ENCODE measurements at regions of chr1 and their contacts with region 1.

Region 1: GRCh38 chr1:210292231-210292871 is 36.4 kb upstream of the HHAT start:
- DNase-seq: peak; percentile 84
- ATAC-seq: peak; percentile 93
- H3K4me3 Mint-ChIP-seq: peak overlapping the region; percentile 63
- H3K27ac Mint-ChIP-seq: no peak overlapping the region
- H3K4me1 Mint-ChIP-seq: peaks cover 37% of the 10 kb centered on the region
- H3K27me3 Mint-ChIP-seq: peaks cover 36% of the 10 kb centered on the region
- CTCF ChIP-seq: no peak

Region 2: GRCh38 chr1:210250998-210251679 is 41.2 kb before region 1 on chr1:
- CTCF ChIA-PET with region 1: interaction called, 9 read pairs
- POLR2A ChIA-PET with region 1: interaction called, 17 read pairs
- DNase-seq: peak; percentile 79
- ATAC-seq: peak; percentile 52
- H3K4me3 Mint-ChIP-seq: peak overlapping the region; percentile 72
- H3K27ac Mint-ChIP-seq: peak overlapping the region; percentile 53
- H3K4me1 Mint-ChIP-seq: peaks cover 39% of the 10 kb centered on the region
- H3K27me3 Mint-ChIP-seq: peaks cover 17% of the 10 kb centered on the region
- CTCF ChIP-seq: no peak

Region 3: DNA sequence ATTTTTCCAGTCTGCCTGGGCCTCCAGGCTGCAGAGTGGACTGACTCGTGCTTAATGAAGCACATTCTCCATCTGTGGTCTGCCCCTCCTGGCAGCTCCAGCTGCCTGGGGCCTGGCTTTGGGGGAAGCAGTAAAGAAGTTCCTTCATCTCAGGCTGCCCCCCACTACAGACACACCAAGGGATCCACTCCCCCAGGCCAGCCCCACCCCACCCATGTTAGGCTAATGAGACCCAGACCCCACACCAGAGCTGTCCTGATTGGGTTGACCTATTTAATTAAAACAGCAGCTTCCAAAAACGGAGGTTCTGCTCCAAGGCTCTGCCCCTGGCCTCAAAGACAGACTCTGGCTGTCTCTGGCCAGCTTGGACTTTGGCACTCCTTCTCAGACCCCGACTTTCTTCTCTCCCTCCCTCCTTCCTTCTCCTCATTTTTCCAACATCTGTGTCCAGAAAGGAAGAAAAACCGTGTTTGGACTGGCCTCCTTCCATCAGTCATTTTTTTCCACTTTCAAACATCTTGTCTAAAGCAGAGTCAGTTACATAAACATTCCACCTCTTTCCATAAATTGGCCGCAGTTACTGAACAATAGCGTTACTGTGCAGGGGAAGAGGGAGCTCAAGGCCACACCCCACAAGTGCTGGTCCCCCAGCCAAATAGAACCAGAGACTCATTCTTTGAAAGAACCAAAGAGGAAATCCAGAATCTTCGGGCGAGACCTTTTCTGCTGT is 30.0 kb before region 1 on chr1:
- CTCF ChIA-PET with region 1: interaction called, 30 read pairs
- POLR2A ChIA-PET with region 1: no interaction called
- DNase-seq: no peak
- ATAC-seq: no peak
- H3K4me3 Mint-ChIP-seq: no peak overlapping the region
- H3K27ac Mint-ChIP-seq: no peak overlapping the region
- H3K4me1 Mint-ChIP-seq: peaks cover 19% of the 10 kb centered on the region
- H3K27me3 Mint-ChIP-seq: no peaks in the 10 kb centered on the region; the same call in 1 of the 2 replicates
- CTCF ChIP-seq: no peak

Region 4: DNA sequence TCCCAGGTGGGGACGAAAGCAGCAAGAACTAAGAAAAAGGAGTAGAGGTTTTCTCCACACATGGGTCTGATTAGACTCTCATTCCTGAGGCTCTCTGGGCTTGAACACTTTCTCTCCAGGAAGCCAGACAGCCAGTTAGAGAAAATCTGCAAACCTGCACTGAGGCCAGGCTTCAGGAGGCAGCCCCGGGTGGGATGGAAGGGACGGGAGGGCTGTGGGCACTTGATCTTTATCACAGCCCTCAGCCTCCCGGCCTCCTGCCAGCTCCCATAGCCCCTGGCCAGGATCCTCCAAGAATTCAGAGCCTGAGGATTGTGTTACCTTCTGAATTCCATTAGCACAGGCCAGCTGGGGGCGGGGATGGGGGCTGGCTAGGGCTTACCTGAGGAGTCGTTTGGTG is 19.7 kb before region 1 on chr1:
- CTCF ChIA-PET with region 1: interaction called, 10 read pairs
- POLR2A ChIA-PET with region 1: no interaction called
- DNase-seq: peak; percentile 71
- ATAC-seq: peak; percentile 95
- H3K4me3 Mint-ChIP-seq: no peak overlapping the region
- H3K27ac Mint-ChIP-seq: peak overlapping the region; percentile 71; the same call in 1 of the 2 replicates
- H3K4me1 Mint-ChIP-seq: peaks cover 29% of the 10 kb centered on the region
- H3K27me3 Mint-ChIP-seq: peaks cover 2% of the 10 kb centered on the region; the same call in 1 of the 2 replicates
- CTCF ChIP-seq: no peak

Region 5: GRCh38 chr1:210384630-210385029 is 92.3 kb after region 1 on chr1:
- CTCF ChIA-PET with region 1: no interaction called
- POLR2A ChIA-PET with region 1: no interaction called
- DNase-seq: no peak
- ATAC-seq: no peak
- H3K4me3 Mint-ChIP-seq: no peak overlapping the region
- H3K27ac Mint-ChIP-seq: no peak overlapping the region
- H3K4me1 Mint-ChIP-seq: peaks cover 19% of the 10 kb centered on the region
- H3K27me3 Mint-ChIP-seq: no peaks in the 10 kb centered on the region
- CTCF ChIP-seq: no peak

Region 6: GRCh38 chr1:210482945-210483617 is 190.7 kb after region 1 on chr1:
- CTCF ChIA-PET with region 1: no interaction called
- POLR2A ChIA-PET with region 1: no interaction called
- DNase-seq: no peak
- ATAC-seq: no peak
- H3K4me3 Mint-ChIP-seq: no peak overlapping the region
- H3K27ac Mint-ChIP-seq: no peak overlapping the region
- H3K4me1 Mint-ChIP-seq: peaks cover 26% of the 10 kb centered on the region
- H3K27me3 Mint-ChIP-seq: no peaks in the 10 kb centered on the region; the same call in 1 of the 2 replicates
- CTCF ChIP-seq: no peak

Region 7: GRCh38 chr1:210597555-210598134 is 305.3 kb after region 1 on chr1:
- CTCF ChIA-PET with region 1: no interaction called
- POLR2A ChIA-PET with region 1: no interaction called
- DNase-seq: no peak
- ATAC-seq: peak; percentile 62
- H3K4me3 Mint-ChIP-seq: no peak overlapping the region
- H3K27ac Mint-ChIP-seq: no peak overlapping the region
- H3K4me1 Mint-ChIP-seq: peaks cover 8% of the 10 kb centered on the region
- H3K27me3 Mint-ChIP-seq: no peaks in the 10 kb centered on the region; the same call in 1 of the 2 replicates
- CTCF ChIP-seq: no peak

Measured in WTC11 (cell line).